Caco-2 (cell line): ENCODE measurements at regions of chr6 and their contacts with region 1.

Region 1: DNA sequence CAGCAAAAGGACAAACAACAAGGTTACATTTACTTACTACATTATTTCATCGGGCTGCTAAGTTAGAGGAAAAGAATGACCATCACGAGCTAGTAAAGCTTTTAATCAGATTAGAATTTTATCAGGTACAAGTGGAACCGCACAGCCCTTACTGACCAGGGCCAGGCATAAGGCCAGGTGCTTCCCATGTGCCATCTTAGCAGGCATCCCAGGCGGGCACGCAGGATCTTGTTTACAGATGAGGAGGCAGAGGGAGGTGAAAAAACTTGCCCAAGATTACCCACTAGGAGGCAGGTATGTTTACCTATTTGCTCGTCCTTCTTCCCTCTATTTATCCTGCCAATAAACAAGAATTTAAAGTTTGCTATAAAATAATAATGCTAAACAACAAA is 10.7 kb downstream of the EZR start:
- DNase-seq: no peak
- H3K4me3 ChIP-seq: no peak overlapping the region
- H3K4me3 Mint-ChIP-seq: no peak overlapping the region
- H3K27ac Mint-ChIP-seq: no peak overlapping the region
- H3K4me1 ChIP-seq: peaks cover 84% of the 10 kb centered on the region
- H3K4me1 Mint-ChIP-seq: peaks cover 64% of the 10 kb centered on the region
- H3K27me3 ChIP-seq: no peaks in the 10 kb centered on the region
- H3K27me3 Mint-ChIP-seq: no peaks in the 10 kb centered on the region
- CTCF ChIP-seq: no peak

Region 2: DNA sequence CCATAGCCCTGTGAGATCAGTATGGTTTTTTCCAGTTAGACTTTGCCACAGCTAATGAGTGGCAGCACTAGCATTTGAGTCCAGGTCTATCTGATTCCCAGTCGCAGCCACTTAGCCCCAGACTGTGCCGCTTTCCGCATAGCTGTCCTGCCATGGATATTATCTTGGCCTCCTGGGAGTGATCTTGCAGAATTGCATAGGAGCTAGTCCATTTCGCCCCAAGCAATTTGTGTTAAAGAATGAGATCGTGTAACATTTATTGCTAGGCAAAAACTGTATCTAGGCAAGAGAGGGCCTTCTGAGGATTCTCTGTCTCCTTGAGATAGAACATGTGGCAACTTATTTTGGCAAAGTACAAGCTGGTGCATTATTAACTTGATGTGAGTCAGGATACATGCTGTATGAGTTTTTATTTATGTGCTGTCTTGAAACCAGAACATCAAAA is 63.4 kb before region 1 on chr6:
- CTCF ChIA-PET with region 1: no interaction called
- POLR2A ChIA-PET with region 1: no interaction called
- intact Hi-C with region 1: no loop called
- DNase-seq: no peak
- H3K4me3 ChIP-seq: no peak overlapping the region
- H3K4me3 Mint-ChIP-seq: no peak overlapping the region
- H3K27ac Mint-ChIP-seq: no peak overlapping the region
- H3K4me1 ChIP-seq: no peaks in the 10 kb centered on the region
- H3K4me1 Mint-ChIP-seq: no peaks in the 10 kb centered on the region
- H3K27me3 ChIP-seq: no peaks in the 10 kb centered on the region
- H3K27me3 Mint-ChIP-seq: no peaks in the 10 kb centered on the region
- CTCF ChIP-seq: no peak

Region 3: DNA sequence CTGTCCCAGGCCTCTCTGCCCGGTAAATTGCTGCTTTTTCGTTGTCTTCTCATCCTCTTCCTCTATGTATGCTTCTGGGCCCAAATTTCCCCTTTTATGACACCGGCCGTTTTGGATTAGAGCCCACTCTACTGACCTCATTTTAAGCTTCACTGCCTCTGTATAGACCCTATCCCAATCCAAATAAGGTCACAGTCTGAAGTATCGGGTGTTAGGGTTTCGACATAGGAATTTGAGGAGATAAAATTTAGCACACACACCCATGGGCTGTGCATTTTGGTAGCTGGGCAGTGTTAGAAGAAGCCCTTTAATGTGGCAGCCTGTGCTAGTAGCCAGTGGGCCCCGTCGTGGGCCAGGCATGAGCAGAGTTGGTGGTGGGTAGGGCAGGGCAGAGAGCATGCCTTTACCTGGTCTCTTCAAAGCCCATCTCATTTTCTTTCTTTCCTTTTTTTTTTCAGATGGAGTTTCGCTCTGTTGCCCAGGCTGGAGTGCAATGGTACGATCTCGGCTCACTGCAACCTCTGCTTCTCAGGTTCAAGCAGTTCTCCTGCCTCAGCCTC is 38.7 kb after region 1 on chr6:
- CTCF ChIA-PET with region 1: no interaction called
- POLR2A ChIA-PET with region 1: interaction called, 11 read pairs
- intact Hi-C with region 1: no loop called
- DNase-seq: no peak
- H3K4me3 ChIP-seq: no peak overlapping the region
- H3K4me3 Mint-ChIP-seq: no peak overlapping the region
- H3K27ac Mint-ChIP-seq: peak overlapping the region; percentile 75
- H3K4me1 ChIP-seq: peaks cover 57% of the 10 kb centered on the region
- H3K4me1 Mint-ChIP-seq: peaks cover 48% of the 10 kb centered on the region
- H3K27me3 ChIP-seq: no peaks in the 10 kb centered on the region
- H3K27me3 Mint-ChIP-seq: no peaks in the 10 kb centered on the region
- CTCF ChIP-seq: no peak